ENCODE measurements at regions of chr12 and their contacts with region 1.

Region 1: GRCh38 chr12:13135371-13136178 is 32.1 kb upstream of the GSG1 start:
- DNase-seq: peak; percentile 99
- H3K4me3 ChIP-seq: peak overlapping the region; percentile 39; the same call in 1 of the 2 replicates
- H3K27ac ChIP-seq: peak overlapping the region; percentile 88
- H3K4me1 ChIP-seq: peaks cover 50% of the 10 kb centered on the region
- H3K27me3 ChIP-seq: no peaks in the 10 kb centered on the region
- CTCF ChIP-seq: peak; percentile 32; the same call in 1 of the 2 replicates

Region 2: DNA sequence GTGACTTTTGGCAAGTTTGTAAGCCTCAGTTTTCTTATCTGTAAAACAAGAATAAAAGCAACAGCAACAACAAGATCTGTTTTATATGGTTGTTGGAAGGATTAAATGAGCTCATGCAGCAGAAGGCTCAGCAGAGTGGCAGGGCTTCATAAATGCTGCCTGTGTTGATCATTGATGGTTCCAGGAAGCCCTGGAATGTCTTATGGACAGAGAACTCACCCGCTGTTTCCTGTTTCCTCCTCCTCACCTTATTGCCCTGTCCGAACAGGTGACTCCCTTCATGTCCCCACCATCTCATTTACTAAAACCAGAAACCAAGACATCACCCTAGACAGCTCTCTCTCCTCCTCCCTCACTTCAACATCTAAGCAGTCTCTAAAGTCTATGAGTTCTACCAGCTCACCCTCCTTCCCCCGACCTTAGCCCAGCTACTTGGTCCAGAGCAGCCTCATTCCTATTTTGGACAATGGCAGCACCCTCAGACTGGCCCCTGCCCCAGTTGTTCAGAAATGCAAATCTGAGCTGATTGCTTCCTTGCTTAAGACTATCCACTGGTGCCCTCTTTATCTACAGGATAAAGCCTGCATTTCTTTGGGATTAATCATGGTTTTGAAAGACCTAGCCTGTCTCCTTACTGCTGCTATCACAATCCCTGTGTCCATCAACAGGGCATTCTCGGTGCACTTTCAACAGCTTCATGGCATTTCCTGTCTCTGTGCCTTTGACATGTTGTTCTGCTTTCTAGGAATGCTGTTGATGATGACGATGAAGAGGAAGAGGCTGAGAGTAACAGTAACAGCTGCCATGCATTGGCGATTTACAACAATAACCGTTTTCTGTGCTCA is 10.7 kb before region 1 on chr12:
- CTCF ChIA-PET with region 1: interaction called, 8 read pairs
- POLR2A ChIA-PET with region 1: interaction called, 17 read pairs
- intact Hi-C with region 1: loop called (anchors 1 kb)
- DNase-seq: peak; percentile 66 to 93
- H3K4me3 ChIP-seq: no peak overlapping the region
- H3K27ac ChIP-seq: peak overlapping the region; percentile 41
- H3K4me1 ChIP-seq: peaks cover 45% of the 10 kb centered on the region
- H3K27me3 ChIP-seq: no peaks in the 10 kb centered on the region
- CTCF ChIP-seq: no peak

Region 3: DNA sequence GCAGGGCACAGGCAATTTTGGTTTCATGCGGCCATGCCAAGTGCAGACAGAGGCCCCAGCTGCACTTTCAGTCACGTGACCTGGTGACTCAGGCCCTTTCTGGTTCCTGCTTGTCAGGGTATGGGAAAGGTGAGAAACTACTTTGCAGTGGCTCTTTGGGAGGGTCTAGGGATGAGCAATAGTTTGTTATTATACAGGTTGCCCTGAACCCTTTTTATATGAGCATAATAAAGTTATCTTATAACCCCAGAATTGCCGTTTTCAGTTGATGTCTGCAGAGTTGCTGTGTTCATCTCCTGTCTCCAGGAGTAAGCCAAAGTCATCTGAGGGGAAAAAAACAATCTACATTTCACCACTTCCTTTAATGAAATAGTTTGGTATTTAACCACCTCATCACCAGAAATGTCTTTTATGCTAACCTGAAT is 30.1 kb after region 1 on chr12:
- CTCF ChIA-PET with region 1: interaction called, 3 read pairs
- POLR2A ChIA-PET with region 1: interaction called, 3 read pairs
- intact Hi-C with region 1: loop called (anchors 1 kb)
- DNase-seq: peak; percentile 95 to 98
- H3K4me3 ChIP-seq: no peak overlapping the region
- H3K27ac ChIP-seq: peak overlapping the region; percentile 97
- H3K4me1 ChIP-seq: peaks cover 73% of the 10 kb centered on the region
- H3K27me3 ChIP-seq: no peaks in the 10 kb centered on the region
- CTCF ChIP-seq: no peak

Region 4: DNA sequence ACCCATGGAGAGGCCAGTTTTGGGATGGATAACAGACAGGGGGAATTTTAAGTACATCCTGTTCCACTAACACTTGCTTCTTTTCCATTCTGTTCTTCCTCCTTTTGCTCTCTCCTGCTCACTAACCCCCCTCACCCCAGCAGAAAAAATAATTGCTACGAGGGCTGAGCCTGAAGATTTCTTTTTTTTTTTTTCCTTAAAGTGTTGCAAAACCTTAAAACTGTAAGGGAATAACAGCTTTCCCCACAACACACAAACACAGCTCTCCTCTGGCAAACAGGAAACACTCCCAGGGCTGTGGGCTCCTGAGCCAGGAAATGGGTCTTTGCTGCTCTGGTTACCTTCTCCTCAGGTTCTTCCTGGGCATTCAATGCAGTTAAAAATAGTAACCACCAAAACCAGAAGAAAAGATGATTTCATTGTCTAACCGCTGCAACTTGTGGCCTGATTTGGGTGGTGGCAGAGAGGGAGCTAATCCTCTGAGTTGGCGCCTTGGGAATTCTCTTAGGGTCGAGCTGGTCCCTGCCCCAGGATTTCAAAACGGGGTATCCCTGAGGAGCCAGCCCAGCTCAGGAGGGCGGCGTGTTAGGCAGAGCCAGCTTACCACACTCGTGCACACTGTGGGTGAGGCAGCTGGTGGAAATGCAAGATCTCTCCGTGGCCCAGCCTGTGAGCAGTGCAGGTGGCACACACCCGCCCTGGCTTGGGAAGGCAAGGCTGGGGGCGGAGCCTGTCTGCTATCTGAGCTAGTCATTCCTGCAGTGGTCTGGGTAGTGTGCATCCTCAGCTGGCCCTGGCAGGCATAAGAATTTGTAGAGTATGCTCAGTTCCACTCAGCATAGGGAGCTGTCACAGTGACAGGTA is 43.9 kb after region 1 on chr12:
- CTCF ChIA-PET with region 1: interaction called, 9 read pairs
- POLR2A ChIA-PET with region 1: interaction called, 10 read pairs
- intact Hi-C with region 1: no loop called
- DNase-seq: peak; percentile 94 to 95
- H3K4me3 ChIP-seq: peak overlapping the region; percentile 39; the same call in 1 of the 2 replicates
- H3K27ac ChIP-seq: peak overlapping the region; percentile 95
- H3K4me1 ChIP-seq: peaks cover 89% of the 10 kb centered on the region
- H3K27me3 ChIP-seq: no peaks in the 10 kb centered on the region
- CTCF ChIP-seq: no peak

Region 5: DNA sequence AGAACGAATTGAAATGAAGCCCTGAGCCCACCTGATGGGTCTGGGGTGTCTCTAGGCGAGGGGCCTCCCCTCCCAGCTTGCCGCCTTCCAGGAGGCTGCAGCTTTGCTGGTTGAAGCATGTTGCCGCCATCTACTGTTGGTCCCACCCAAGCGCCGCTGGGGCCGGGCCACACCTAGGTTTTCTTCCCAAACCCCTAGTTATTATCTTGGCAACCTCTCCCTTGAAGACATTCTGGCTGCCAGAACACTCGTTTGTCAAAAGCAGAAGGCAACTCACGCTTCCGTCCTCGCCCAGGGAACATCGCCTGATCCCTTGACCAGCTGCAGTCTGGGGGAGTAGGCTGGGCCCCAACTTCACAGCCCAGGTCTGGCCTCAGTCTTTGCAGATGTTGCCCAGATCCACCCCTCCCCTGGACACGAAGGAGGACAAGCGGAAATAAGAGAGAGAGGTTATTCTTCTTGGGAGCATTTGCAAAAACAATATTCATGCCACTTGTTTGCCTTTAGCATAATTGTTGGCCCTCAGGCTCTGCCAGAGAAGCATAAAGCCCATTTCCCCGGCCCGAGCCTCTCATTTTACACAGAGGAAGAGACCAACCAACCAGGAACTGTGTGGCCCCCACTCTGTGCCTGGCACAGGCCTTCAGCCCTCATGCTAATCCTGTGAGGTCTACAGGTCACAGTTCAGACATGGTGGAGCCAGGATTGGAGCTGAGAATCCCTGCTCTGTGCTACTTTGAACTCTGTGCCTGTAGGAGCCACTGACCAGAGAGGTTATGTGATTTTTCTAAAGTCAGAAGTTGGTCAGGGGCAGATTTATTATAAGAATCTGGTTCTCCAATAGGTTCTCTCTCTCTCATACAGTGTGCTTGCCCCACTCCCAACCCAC is 67.7 kb after region 1 on chr12:
- CTCF ChIA-PET with region 1: interaction called, 4 read pairs
- POLR2A ChIA-PET with region 1: interaction called, 13 read pairs
- intact Hi-C with region 1: loop called (anchors 2 kb)
- DNase-seq: peak in 1 of 2 experiments; percentile 83
- H3K4me3 ChIP-seq: peak overlapping the region; percentile 32; the same call in 1 of the 2 replicates
- H3K27ac ChIP-seq: peak overlapping the region; percentile 99
- H3K4me1 ChIP-seq: peaks cover 97% of the 10 kb centered on the region
- H3K27me3 ChIP-seq: no peaks in the 10 kb centered on the region
- CTCF ChIP-seq: no peak

Region 6: GRCh38 chr12:13609894-13610679 is 474.5 kb after region 1 on chr12:
- CTCF ChIA-PET with region 1: no interaction called
- POLR2A ChIA-PET with region 1: no interaction called
- intact Hi-C with region 1: no loop called
- DNase-seq: no peak
- H3K4me3 ChIP-seq: no peak overlapping the region
- H3K27ac ChIP-seq: no peak overlapping the region
- H3K4me1 ChIP-seq: no peaks in the 10 kb centered on the region
- H3K27me3 ChIP-seq: no peaks in the 10 kb centered on the region
- CTCF ChIP-seq: no peak

Measured in PC-9 (cell line).